IMR-90 (cell line): ENCODE measurements at regions of chr1 and their contacts with region 1.

Region 1: GRCh38 chr1:196660852-196661251 is 9.0 kb downstream of the CFH start:
- DNase-seq: peak; percentile 33
- ATAC-seq: peak; percentile 68
- H3K4me3 ChIP-seq: no peak overlapping the region
- H3K27ac ChIP-seq: no peak overlapping the region
- H3K4me1 ChIP-seq: no peaks in the 10 kb centered on the region
- H3K27me3 ChIP-seq: no peaks in the 10 kb centered on the region
- CTCF ChIP-seq: peak; percentile 74
- POLR2A ChIP-seq: no peak
- RAD21 ChIP-seq: peak; percentile 82

Region 2: DNA sequence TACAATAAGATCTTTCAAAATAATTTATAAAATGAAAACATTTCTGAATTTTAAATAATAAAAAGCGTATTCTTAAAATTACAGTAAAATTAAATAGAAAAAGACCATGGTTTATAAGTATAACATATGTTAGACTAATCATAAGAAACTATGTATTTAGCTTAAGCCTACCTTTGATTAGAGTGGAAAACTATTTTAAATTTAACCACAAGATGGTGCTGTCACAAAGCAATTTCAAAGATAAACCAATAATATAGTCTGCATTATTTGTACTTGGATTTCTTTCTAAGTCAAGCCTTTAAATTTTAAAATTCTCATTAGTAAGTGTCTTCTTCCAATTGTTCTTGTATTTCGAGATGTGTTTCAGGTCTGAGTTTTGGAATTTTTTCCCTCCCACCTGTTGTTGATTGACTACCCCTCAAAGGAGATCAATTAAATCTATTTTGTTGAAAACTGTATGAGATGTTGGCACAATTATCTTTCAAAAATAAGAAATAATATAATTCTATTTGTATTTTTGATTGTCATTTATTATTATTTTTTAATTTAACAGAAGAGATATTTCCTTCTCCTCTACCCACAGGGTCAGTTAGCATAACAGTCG is 512.4 kb before region 1 on chr1:
- CTCF ChIA-PET with region 1: interaction called, 3 read pairs
- POLR2A ChIA-PET with region 1: no interaction called
- dilution Hi-C with region 1: no loop called
- in situ Hi-C with region 1: loop called (anchors 10 kb)
- intact Hi-C with region 1: loop called (anchors 2 kb)
- DNase-seq: peak; percentile 57
- ATAC-seq: peak; percentile 77
- H3K4me3 ChIP-seq: no peak overlapping the region
- H3K27ac ChIP-seq: no peak overlapping the region
- H3K4me1 ChIP-seq: no peaks in the 10 kb centered on the region
- H3K27me3 ChIP-seq: no peaks in the 10 kb centered on the region
- CTCF ChIP-seq: peak; percentile 68
- POLR2A ChIP-seq: no peak
- RAD21 ChIP-seq: peak; percentile 77

Region 3: GRCh38 chr1:196317535-196318522 is 343.0 kb before region 1 on chr1:
- CTCF ChIA-PET with region 1: no interaction called
- POLR2A ChIA-PET with region 1: no interaction called
- dilution Hi-C with region 1: no loop called
- in situ Hi-C with region 1: loop called (anchors 10 kb)
- intact Hi-C with region 1: loop called (anchors 1 kb)
- DNase-seq: peak; percentile 54
- ATAC-seq: peak; percentile 80
- H3K4me3 ChIP-seq: no peak overlapping the region
- H3K27ac ChIP-seq: no peak overlapping the region
- H3K4me1 ChIP-seq: no peaks in the 10 kb centered on the region
- H3K27me3 ChIP-seq: no peaks in the 10 kb centered on the region
- CTCF ChIP-seq: peak; percentile 65
- POLR2A ChIP-seq: no peak
- RAD21 ChIP-seq: peak; percentile 60

Region 4: DNA sequence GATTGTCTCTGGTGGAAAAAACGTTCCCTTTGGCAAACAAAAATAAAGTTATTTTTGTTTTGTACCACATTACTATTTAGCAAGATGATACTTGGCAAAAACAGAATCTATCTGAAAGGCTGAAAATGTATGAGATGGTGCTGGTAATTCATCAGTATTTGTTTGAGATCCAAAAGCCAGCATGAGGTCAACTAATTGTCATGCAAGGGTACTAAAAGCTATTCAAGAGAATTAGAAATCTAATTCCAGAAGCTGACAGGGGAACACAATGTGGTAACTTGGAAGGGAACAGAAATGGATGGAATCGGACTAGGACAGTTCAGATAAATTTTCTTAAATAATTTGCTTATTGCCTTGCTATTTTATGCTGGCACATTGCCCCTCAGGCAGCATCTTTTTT is 316.4 kb before region 1 on chr1:
- CTCF ChIA-PET with region 1: interaction called, 4 read pairs
- POLR2A ChIA-PET with region 1: no interaction called
- dilution Hi-C with region 1: loop called (anchors 25 kb)
- in situ Hi-C with region 1: loop called (anchors 10 kb)
- intact Hi-C with region 1: no loop called
- DNase-seq: no peak
- ATAC-seq: no peak
- H3K4me3 ChIP-seq: no peak overlapping the region
- H3K27ac ChIP-seq: no peak overlapping the region
- H3K4me1 ChIP-seq: no peaks in the 10 kb centered on the region
- H3K27me3 ChIP-seq: no peaks in the 10 kb centered on the region
- CTCF ChIP-seq: no peak
- POLR2A ChIP-seq: no peak
- RAD21 ChIP-seq: no peak

Region 5: DNA sequence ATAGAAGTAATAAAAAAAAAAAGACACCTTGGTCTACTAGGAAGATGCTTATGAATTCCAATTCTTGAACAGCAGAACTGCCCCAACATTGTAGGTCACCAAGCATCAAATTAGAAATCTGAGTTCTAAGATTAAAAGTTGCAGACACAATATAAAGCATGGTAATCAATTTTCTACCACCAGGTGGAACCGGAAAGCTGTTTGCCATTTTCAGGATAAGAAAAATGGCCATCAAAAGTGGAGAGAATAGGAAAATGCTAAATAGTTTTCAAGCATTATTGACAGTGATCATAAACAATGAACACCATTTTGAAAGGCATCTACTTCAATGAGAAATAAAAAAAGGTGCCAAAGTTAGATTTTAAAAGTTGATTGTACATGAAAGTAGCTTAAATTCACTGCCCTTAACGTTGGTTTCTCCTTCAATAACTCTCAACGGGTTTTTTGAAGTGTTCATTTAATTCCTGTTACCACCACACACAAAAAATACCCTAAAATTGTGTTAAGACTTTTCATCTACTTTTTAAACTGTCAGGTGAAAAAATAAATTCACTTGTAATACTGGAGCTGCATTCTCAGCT is 305.6 kb before region 1 on chr1:
- CTCF ChIA-PET with region 1: interaction called, 9 read pairs
- POLR2A ChIA-PET with region 1: no interaction called
- dilution Hi-C with region 1: no loop called
- in situ Hi-C with region 1: no loop called
- intact Hi-C with region 1: loop called (anchors 1 kb)
- DNase-seq: peak; percentile 25
- ATAC-seq: no peak
- H3K4me3 ChIP-seq: no peak overlapping the region
- H3K27ac ChIP-seq: no peak overlapping the region
- H3K4me1 ChIP-seq: no peaks in the 10 kb centered on the region
- H3K27me3 ChIP-seq: no peaks in the 10 kb centered on the region
- CTCF ChIP-seq: peak; percentile 61
- POLR2A ChIP-seq: no peak
- RAD21 ChIP-seq: peak; percentile 59